MCF 10A (cell line): ENCODE measurements at regions of chr14 and their contacts with region 1.

Region 1: GRCh38 chr14:22918804-22919600 is at the start of gene RBM23:
- DNase-seq: peak; percentile 100
- H3K4me3 Mint-ChIP-seq: peak within 1 kb of the TSS; percentile 87
- H3K27ac Mint-ChIP-seq: peak within 1 kb of the TSS; percentile 100
- H3K4me1 Mint-ChIP-seq: peaks cover 31% of the 10 kb centered on the region
- H3K27me3 Mint-ChIP-seq: no peaks in the 10 kb centered on the region
- CTCF ChIP-seq: no peak
- total RNA-seq, gene RBM23: 57.6 and 60.6 TPM in 2 replicates

Region 2: GRCh38 chr14:22412926-22413411 is 506.0 kb before region 1 on chr14:
- CTCF ChIA-PET with region 1: no interaction called
- POLR2A ChIA-PET with region 1: no interaction called
- intact Hi-C with region 1: no loop called
- DNase-seq: no peak
- H3K4me3 Mint-ChIP-seq: no peak overlapping the region
- H3K27ac Mint-ChIP-seq: no peak overlapping the region
- H3K4me1 Mint-ChIP-seq: no peaks in the 10 kb centered on the region
- H3K27me3 Mint-ChIP-seq: peaks cover 18% of the 10 kb centered on the region
- CTCF ChIP-seq: no peak

Region 3: GRCh38 chr14:22872033-22872832 is 46.8 kb before region 1 on chr14:
- CTCF ChIA-PET with region 1: interaction called, 10 read pairs
- POLR2A ChIA-PET with region 1: interaction called, 34 read pairs
- intact Hi-C with region 1: no loop called
- DNase-seq: peak; percentile 90
- H3K4me3 Mint-ChIP-seq: peak overlapping the region; percentile 79
- H3K27ac Mint-ChIP-seq: peak overlapping the region; percentile 91
- H3K4me1 Mint-ChIP-seq: peaks cover 20% of the 10 kb centered on the region
- H3K27me3 Mint-ChIP-seq: no peaks in the 10 kb centered on the region
- CTCF ChIP-seq: peak; percentile 81

Region 4: DNA sequence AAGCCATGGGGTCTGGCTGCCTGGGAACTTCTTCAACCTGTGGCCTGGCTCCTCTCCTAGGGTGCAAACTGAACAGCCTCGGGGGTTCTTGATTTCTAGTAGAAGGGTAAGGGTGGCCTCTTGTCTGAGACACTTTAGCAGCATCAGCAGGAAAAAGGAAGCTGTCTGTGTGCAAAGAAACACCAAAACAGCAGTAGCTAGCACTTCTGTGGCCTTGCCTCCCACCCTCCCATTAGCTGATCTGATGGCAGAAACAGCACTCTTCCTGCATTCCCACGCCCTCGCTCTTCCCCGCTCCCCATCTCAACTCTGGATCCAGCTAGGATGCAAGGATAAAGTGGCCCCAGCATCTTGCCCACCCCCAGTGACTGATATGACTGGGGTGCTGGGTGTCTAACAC is 243.8 kb after region 1 on chr14:
- CTCF ChIA-PET with region 1: no interaction called
- POLR2A ChIA-PET with region 1: no interaction called
- intact Hi-C with region 1: no loop called
- DNase-seq: no peak
- H3K4me3 Mint-ChIP-seq: no peak overlapping the region
- H3K27ac Mint-ChIP-seq: no peak overlapping the region
- H3K4me1 Mint-ChIP-seq: peaks cover 19% of the 10 kb centered on the region
- H3K27me3 Mint-ChIP-seq: no peaks in the 10 kb centered on the region
- CTCF ChIP-seq: no peak